ENCODE measurements at regions of chr4 and their contacts with region 1.

Region 1: DNA sequence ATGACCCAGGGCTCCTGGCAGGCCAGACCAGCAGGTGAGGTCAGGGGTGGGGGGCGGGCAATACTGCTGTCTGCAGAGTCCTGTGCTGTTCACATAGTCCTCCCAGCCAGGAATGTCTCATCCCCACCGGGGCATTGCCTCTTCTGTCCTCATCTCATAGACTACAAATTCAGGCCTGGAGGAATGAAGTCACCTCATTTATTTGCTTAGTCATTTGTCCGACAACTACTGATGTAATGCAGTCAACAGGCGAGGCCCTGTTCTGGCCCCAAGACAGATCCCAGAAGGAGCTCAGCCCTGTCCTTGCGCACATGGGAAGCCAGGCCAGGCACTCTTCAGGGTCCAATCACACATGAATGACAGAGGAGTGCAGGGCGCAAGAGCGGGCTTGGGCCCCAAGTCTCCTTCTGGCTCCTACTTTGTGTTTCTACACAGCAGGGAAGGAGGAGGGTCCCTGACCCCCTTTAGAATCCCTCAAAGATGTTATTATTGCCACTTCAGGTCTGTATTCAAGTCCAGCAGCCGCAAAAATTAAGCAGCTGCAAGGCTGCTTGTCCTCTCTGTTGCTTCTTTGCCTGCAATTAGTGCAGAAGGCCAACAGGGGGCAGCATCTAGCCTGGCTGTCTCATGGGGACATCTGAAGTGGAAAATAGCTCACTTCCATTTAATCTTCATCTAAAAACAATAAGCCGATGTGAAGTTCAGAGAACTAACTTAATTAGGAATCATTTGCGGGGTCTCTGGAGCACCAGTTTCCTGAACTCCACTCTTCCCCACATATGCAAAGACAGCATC is 15.2 kb upstream of the HMX1 start:
- DNase-seq: no peak
- ATAC-seq: no peak
- H3K4me3 ChIP-seq: no peak overlapping the region
- H3K27ac ChIP-seq: no peak overlapping the region
- H3K4me1 ChIP-seq: no peaks in the 10 kb centered on the region
- H3K27me3 ChIP-seq: peaks cover 0 to 3% of the 10 kb centered on the region in 2 donors
- CTCF ChIP-seq: peak in 1 of 7 experiments; percentile 9
- POLR2A ChIP-seq: no peak

Region 2: DNA sequence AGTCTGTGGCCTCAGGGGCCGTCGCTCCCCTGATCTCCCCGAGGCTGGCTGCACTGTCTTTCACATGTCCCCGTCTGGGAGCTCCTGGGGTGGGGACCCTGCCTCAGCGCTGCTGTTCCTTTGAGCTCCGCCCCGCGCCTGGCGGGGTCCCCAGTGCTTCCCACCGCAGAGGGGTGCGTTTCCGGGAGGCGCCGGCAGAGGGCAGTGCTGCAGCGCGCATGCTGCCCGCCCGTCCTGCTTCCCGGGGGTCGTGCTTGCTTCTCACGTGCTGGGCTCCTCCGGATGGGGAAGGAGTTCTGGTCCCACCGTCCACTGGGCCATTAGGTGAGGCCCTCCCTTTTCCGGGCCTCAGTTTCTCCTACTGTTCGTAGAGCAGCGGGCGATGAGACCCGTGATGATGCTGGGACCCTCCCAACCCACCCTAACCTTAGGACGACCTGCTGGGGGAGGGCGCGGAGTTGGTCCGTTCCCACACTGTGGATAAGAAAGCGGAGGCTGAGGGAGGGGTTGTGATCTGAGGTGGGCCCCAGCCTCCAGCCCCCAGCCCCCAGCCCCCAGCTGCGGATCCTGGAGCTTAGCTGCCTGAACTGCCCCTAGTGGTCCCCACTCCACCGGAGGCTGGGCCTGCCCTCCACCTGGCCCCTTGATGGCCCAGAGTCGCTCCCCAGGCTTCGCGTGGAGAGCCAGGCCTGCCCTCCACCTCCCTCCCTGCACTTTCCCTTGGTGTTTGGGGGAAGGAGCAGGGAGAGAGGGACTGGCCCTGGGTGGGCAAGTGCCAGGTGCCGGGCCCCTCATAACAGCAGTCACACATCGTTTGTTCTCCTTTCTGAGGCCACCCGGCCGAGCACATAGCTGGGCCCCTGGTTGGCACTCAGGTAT is 279.0 kb before region 1 on chr4:
- intact Hi-C with region 1: loop called (anchors 10 kb)
- DNase-seq: peak in 3 of 4 donors; percentile 35 to 52 (median 44)
- ATAC-seq: peak; percentile 15
- H3K4me3 ChIP-seq: no peak overlapping the region
- H3K27ac ChIP-seq: no peak overlapping the region
- H3K4me1 ChIP-seq: no peaks in the 10 kb centered on the region
- H3K27me3 ChIP-seq: peaks cover 0 to 7% of the 10 kb centered on the region in 2 donors
- CTCF ChIP-seq: peak; percentile 62 to 98 (median 79)
- POLR2A ChIP-seq: no peak

Region 3: DNA sequence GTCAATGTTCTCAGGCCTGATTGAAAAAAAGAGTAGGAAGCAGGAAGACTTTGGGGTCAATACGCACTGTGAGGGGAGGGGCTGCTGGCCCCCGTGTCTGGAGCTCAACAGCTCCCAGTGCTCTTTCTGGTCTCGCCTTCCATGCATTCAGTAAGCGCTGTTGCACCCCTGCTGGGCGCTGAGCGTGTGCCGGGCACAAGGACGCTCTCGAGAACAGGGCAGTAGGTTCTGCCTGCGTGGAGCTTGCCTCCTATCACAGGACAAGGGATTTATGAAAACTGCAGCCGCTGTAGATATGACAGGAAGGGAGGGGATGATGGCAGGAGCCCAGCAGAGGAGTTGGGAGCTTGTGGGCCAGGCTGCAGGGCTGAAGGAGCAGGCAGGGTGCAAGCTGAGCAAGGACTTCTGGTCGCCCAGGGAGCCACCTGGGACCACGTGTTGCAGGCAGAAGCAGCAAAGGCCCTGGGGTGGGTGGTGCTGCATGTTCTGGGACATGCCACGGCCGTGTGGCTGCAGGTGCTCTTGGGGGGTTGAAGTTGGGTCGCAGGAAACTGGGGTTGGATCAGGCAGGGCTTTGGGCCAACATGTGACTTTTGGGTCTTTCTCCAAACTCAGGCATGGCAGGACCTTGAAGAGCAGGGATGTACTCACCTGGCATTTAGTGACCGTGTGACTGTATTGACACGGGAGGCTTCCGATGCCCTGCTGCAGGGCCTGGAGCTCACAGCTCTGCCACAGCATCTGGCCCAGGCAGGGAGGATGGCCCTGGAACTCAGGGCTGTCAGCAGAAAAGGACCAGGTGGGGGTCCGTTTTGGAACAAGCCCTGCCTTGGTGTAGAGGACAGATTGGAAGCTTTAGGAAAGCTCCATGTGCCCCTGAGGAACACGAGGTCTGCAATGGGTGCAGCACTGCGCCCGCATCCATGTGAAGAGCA is 196.3 kb before region 1 on chr4:
- intact Hi-C with region 1: loop called (anchors 10 kb)
- DNase-seq: peak in 1 of 4 donors; percentile 2
- ATAC-seq: no peak
- H3K4me3 ChIP-seq: no peak overlapping the region
- H3K27ac ChIP-seq: no peak overlapping the region
- H3K4me1 ChIP-seq: no peaks in the 10 kb centered on the region
- H3K27me3 ChIP-seq: peaks cover 0 to 6% of the 10 kb centered on the region in 2 donors
- CTCF ChIP-seq: no peak
- POLR2A ChIP-seq: no peak